ENCODE measurements at regions of chr3 and their contacts with region 1.

Region 1: GRCh38 chr3:112642912-112643506 is 2.1 kb upstream of the CCDC80 start:
- DNase-seq: peak; percentile 67
- H3K4me3 ChIP-seq: no peak overlapping the region
- CTCF ChIP-seq: peak; percentile 82

Region 2: GRCh38 chr3:112446343-112446742 is 196.7 kb before region 1 on chr3:
- CTCF ChIA-PET with region 1: no interaction called
- POLR2A ChIA-PET with region 1: no interaction called
- DNase-seq: peak; percentile 45
- H3K4me3 ChIP-seq: no peak overlapping the region
- CTCF ChIP-seq: no peak

Region 3: GRCh38 chr3:112505907-112506306 is 137.1 kb before region 1 on chr3:
- CTCF ChIA-PET with region 1: no interaction called
- POLR2A ChIA-PET with region 1: no interaction called
- DNase-seq: no peak
- H3K4me3 ChIP-seq: no peak overlapping the region
- CTCF ChIP-seq: no peak

Region 4: DNA sequence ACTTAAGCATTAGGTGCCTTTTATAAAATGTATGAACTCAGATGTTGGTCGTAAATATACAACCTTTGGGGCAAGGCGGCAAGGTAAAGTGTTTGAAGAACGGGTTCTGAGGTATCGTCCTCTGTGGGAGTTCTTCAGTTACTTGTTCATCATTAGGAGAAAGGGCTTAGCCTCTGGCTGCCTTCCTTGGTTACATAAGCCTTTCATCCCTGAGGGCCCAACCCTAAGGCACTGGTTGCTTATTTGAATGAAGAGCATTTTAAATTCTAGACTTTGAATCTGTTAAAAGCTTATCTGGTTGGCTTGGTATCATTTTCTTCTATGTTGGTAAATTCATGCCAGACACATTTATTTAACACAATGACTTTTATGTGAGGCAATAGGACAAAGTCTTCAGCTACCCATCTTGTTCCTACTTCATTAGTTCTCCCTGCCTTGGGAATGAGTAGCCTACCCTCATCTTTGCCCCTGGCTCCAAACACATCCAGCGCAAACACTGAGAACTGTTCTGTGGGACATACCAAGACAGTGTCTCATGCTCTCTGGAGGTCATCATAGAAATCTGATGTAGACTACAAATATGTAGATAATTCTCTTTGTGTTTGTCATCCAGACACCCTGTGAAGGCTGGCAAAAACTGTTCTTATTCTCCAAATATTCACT is 10.3 kb after region 1 on chr3:
- CTCF ChIA-PET with region 1: interaction called, 26 read pairs
- POLR2A ChIA-PET with region 1: interaction called, 15 read pairs
- DNase-seq: peak; percentile 98
- H3K4me3 ChIP-seq: no peak overlapping the region
- CTCF ChIP-seq: no peak

Region 5: GRCh38 chr3:112709911-112710310 is 66.9 kb after region 1 on chr3:
- CTCF ChIA-PET with region 1: interaction called, 12 read pairs
- POLR2A ChIA-PET with region 1: no interaction called
- DNase-seq: no peak
- H3K4me3 ChIP-seq: no peak overlapping the region
- CTCF ChIP-seq: no peak

Region 6: GRCh38 chr3:112807685-112808084 is 164.7 kb after region 1 on chr3:
- CTCF ChIA-PET with region 1: interaction called, 223 read pairs
- POLR2A ChIA-PET with region 1: interaction called, 3 read pairs
- DNase-seq: no peak
- H3K4me3 ChIP-seq: no peak overlapping the region
- CTCF ChIP-seq: no peak

Region 7: GRCh38 chr3:112979240-112979832 is 336.3 kb after region 1 on chr3:
- CTCF ChIA-PET with region 1: interaction called, 76 read pairs
- POLR2A ChIA-PET with region 1: no interaction called
- DNase-seq: peak; percentile 5
- H3K4me3 ChIP-seq: no peak overlapping the region
- CTCF ChIP-seq: peak; percentile 30

Region 8: GRCh38 chr3:113019182-113020137 is 376.5 kb after region 1 on chr3:
- CTCF ChIA-PET with region 1: interaction called, 9 read pairs
- POLR2A ChIA-PET with region 1: interaction called, 10 read pairs
- DNase-seq: peak; percentile 59
- H3K4me3 ChIP-seq: peak overlapping the region; percentile 82
- CTCF ChIP-seq: no peak